ENCODE measurements at regions of chr10 and their contacts with region 1.

Region 1: GRCh38 chr10:80924063-80924952 is 386.6 kb downstream of the SH2D4B start:
- DNase-seq: peak; percentile 7 to 51
- ATAC-seq: peak; percentile 78 to 90; a peak in 4 of 6 replicates
- H3K4me3 ChIP-seq: no peak overlapping the region
- H3K27ac ChIP-seq: no peak overlapping the region
- H3K4me1 ChIP-seq: no peaks in the 10 kb centered on the region
- CTCF ChIP-seq: peak; percentile 76
- EP300 ChIP-seq: no peak
- POLR2A ChIP-seq: no peak
- RAD21 ChIP-seq: peak; percentile 51 to 58; a peak in 4 of 5 replicates

Region 2: GRCh38 chr10:80699602-80700039 is 224.7 kb before region 1 on chr10:
- CTCF ChIA-PET with region 1: interaction called, 25 read pairs
- POLR2A ChIA-PET with region 1: no interaction called
- DNase-seq: peak; percentile 59 to 73
- ATAC-seq: peak; percentile 87 to 97
- H3K4me3 ChIP-seq: no peak overlapping the region
- H3K27ac ChIP-seq: no peak overlapping the region
- H3K4me1 ChIP-seq: no peaks in the 10 kb centered on the region
- CTCF ChIP-seq: peak; percentile 81
- EP300 ChIP-seq: no peak
- POLR2A ChIP-seq: no peak
- RAD21 ChIP-seq: peak; percentile 81 to 86

Region 3: DNA sequence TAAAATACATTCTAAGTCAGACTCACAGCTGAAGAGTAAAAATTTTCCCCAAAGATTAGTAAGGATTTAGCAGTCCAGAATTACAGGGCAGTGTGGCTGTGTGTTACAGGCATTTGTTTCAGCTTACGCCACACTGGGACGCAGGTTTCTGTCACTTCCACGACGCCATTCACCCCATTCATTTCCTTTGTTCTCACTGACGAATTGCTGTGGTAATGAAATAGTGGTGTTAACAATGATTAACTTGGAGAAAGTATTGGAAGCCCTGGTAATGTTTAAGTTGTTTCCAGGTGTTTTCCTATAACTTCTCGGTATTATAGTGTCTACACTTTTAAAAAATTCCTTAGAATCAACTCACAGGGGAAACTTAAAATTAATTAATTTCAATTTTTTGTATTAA is 15.7 kb before region 1 on chr10:
- CTCF ChIA-PET with region 1: interaction called, 17 read pairs
- POLR2A ChIA-PET with region 1: no interaction called
- DNase-seq: no peak
- ATAC-seq: no peak
- H3K4me3 ChIP-seq: no peak overlapping the region
- H3K27ac ChIP-seq: no peak overlapping the region
- H3K4me1 ChIP-seq: no peaks in the 10 kb centered on the region
- CTCF ChIP-seq: no peak
- EP300 ChIP-seq: no peak
- POLR2A ChIP-seq: no peak
- RAD21 ChIP-seq: no peak

Measured in A549 (cell line).